AG04450 (cell line): ENCODE measurements at regions of chr19 and their contacts with region 1.

Region 1: DNA sequence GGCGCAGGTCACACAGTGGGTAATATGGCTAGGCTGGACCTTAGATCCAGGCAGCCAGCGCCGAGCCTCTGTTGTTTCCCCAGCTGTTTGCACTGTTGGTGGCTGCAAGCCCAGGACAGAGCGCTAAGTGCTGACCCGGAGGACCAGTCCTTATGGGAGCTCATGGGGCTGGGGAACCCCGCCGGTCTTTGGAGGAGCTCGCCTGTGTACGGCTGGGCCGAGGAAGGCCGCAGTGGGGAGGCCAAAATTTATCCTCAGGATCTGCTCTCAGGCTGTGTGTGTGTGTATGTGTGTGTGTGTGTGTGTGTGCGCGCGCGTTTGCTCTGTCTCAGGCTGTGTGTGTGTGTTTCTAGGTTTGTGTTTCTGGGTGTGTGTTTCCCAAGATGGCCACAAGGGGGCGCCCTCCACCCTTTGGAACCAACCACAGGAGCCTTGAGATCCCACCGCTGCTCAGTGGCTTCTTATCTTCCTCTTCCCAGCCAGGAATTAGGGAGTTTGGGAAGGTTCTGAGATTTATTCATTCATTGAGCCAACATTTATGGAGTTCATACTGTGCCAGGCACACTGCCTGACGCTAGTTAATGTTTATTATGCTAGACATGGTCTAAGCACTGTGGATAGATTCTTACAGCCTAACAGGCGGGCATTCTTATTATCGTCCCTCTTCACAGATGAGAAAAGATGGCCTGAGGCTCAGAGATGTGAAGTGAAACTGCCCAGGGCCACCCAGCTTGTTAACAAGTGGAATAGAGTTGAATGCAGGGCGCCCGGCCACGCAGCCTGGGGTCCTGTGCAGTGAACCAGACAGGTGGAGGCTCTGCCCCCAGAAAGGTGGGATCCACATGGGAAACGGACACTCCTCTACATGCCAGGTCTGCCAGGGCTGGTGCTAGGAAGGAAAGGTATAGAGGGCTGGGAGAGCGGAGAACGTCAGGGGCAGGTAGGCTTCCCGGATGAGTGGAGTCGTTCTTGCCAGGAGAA is 13.0 kb downstream of the PGLYRP1 start:
- DNase-seq: no peak
- H3K4me3 ChIP-seq: no peak overlapping the region
- H3K27ac ChIP-seq: no peak overlapping the region
- H3K27me3 ChIP-seq: peaks cover 6% of the 10 kb centered on the region
- CTCF ChIP-seq: peak; percentile 82

Region 2: GRCh38 chr19:45994989-45995714 is 14.7 kb before region 1 on chr19 and contains the start of gene CCDC61:
- CTCF ChIA-PET with region 1: interaction called, 11 read pairs
- POLR2A ChIA-PET with region 1: interaction called, 4 read pairs
- DNase-seq: peak; percentile 99
- H3K4me3 ChIP-seq: peak within 1 kb of the TSS; percentile 95
- H3K27ac ChIP-seq: no peak within 1 kb of the TSS
- H3K27me3 ChIP-seq: peaks cover 3% of the 10 kb centered on the region
- CTCF ChIP-seq: no peak
- polyA plus RNA-seq, gene CCDC61: 4.2 and 6.8 TPM in 2 replicates

Region 3: GRCh38 chr19:46090444-46090843 is 80.6 kb after region 1 on chr19:
- CTCF ChIA-PET with region 1: no interaction called
- POLR2A ChIA-PET with region 1: no interaction called
- DNase-seq: no peak
- H3K4me3 ChIP-seq: no peak overlapping the region
- H3K27ac ChIP-seq: no peak overlapping the region
- H3K27me3 ChIP-seq: peaks cover 51% of the 10 kb centered on the region
- CTCF ChIP-seq: no peak